ENCODE measurements at regions of chr4 and their contacts with region 1.

Region 1: DNA sequence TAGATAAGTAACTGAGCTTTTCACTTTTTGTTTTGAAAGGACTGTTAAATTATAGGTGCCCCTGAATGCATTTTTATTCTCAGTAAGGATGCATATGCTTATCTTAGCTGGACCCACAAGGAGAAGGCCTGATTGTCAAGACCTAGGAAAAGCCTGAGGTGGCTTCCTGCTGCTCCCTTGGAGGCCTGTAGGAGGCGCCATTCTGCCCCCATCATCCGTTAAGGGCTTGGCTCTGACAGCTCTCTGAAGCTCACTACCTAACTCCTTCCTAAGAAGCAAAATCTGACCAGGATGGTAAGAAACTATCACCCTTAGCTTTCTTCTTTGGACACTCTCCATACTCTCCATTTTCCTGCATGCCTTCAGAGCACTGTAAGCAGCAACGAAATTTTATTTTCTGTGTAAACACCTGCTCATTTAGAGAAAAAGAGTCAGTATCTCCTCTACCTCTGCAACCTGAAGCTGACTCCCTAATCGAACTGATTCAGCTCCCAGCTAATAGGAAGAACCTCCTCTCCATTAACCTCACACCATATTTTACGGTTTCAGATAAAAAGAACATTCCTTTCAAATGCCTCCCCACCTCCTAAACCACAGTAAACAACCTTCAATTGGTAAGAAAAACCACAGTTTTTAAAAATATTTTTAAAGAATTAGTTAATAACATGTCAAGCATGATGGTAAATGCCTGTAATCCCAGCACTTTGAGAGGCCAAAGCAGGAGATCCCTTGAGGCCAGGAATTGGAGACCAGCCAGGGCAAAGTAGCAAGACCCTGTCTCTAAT is 73.4 kb upstream of the EDNRA start:
- DNase-seq: peak; percentile 16
- ATAC-seq: peak; percentile 63
- H3K4me3 ChIP-seq: no peak overlapping the region
- H3K27ac ChIP-seq: no peak overlapping the region
- H3K4me1 ChIP-seq: no peaks in the 10 kb centered on the region
- H3K27me3 ChIP-seq: no peaks in the 10 kb centered on the region
- CTCF ChIP-seq: peak; percentile 14 to 83 (median 82); a peak in 4 of 6 replicates
- POLR2A ChIP-seq: no peak
- RAD21 ChIP-seq: peak; percentile 32

Region 2: GRCh38 chr4:147388018-147388417 is 19.4 kb before region 1 on chr4:
- CTCF ChIA-PET with region 1: no interaction called
- POLR2A ChIA-PET with region 1: no interaction called
- RAD21 ChIA-PET with region 1: no interaction called
- intact Hi-C with region 1: loop called (anchors 1 kb)
- DNase-seq: no peak
- ATAC-seq: no peak
- H3K4me3 ChIP-seq: no peak overlapping the region
- H3K27ac ChIP-seq: no peak overlapping the region
- H3K4me1 ChIP-seq: no peaks in the 10 kb centered on the region
- H3K27me3 ChIP-seq: no peaks in the 10 kb centered on the region
- CTCF ChIP-seq: no peak
- POLR2A ChIP-seq: no peak
- RAD21 ChIP-seq: no peak

Region 3: DNA sequence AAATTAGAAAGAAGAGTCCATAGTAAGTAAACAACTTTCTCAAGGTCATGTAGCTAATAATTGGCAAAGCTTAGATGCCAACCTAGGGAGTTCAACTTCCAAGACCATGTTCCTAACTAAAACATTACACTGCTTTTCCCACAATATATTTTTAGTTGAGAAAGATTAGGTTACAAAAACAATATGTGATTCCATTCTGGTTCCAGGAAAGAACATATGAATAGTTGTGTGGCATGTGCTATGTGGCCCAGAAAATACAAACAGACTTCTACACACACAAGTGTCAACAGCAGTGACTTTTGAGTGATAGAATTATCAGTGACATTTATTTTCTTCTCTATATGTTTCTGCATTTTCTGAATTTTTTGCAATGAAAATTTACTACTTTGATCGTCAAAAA is 10.8 kb after region 1 on chr4:
- CTCF ChIA-PET with region 1: interaction called, 11 read pairs
- POLR2A ChIA-PET with region 1: no interaction called
- RAD21 ChIA-PET with region 1: no interaction called
- intact Hi-C with region 1: no loop called
- DNase-seq: no peak
- ATAC-seq: no peak
- H3K4me3 ChIP-seq: no peak overlapping the region
- H3K27ac ChIP-seq: no peak overlapping the region
- H3K4me1 ChIP-seq: no peaks in the 10 kb centered on the region
- H3K27me3 ChIP-seq: no peaks in the 10 kb centered on the region
- CTCF ChIP-seq: no peak
- POLR2A ChIP-seq: no peak
- RAD21 ChIP-seq: no peak

Measured in HCT116 (cell line).